IMR-90 (cell line): ENCODE measurements at regions of chr11 and their contacts with region 1.

Region 1: DNA sequence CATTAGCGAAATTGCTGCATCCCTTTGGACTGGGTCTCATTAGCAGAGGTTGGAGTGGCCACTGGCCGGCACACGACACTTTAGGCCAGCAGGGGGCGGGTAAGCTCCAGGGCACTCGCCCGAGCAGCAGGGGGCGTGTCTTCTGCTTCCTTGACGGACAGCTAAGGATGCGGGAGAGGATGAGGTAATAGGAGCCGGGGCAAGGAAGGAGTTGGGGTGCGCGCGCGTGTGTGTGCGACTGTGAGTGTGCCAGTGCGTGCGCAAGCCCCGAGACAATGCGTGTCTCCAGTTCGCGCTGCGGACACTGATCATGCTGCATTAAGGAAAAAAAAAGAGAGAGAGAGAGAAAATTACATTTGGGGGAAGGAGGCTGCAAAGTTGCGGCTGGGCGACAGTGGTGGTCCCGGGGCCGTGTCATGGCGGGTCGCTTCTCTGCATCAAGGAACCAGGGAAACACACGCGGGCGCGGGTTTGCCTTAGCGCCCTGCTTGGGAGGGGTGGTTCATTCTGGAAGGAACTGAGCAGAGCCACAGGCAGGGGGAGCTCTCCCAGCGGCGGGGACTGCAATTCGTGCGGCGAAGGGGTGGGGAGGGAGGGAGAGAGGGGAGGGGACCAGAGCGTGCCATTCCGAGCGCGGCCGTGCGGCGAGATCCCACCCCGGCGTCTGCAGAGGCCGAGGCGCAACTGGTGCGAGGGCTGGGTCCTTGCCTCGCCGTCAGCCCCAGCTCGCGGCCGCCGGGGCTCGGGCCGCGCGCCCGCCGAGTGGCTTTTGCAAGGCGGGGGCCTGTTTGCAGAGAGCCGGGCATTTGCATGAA is at the start of gene DTX4:
- DNase-seq: peak; percentile 86
- ATAC-seq: peak; percentile 87
- H3K4me3 ChIP-seq: peak within 1 kb of the TSS; percentile 54
- H3K27ac ChIP-seq: peak within 1 kb of the TSS; percentile 61
- H3K4me1 ChIP-seq: peaks cover 11% of the 10 kb centered on the region
- H3K27me3 ChIP-seq: peaks cover 3% of the 10 kb centered on the region
- CTCF ChIP-seq: peak; percentile 98
- POLR2A ChIP-seq: peak; percentile 48; the same call in 1 of the 2 replicates
- RAD21 ChIP-seq: peak; percentile 96
- total RNA-seq, gene DTX4: 2.5 and 2.7 TPM in 2 replicates

Region 2: DNA sequence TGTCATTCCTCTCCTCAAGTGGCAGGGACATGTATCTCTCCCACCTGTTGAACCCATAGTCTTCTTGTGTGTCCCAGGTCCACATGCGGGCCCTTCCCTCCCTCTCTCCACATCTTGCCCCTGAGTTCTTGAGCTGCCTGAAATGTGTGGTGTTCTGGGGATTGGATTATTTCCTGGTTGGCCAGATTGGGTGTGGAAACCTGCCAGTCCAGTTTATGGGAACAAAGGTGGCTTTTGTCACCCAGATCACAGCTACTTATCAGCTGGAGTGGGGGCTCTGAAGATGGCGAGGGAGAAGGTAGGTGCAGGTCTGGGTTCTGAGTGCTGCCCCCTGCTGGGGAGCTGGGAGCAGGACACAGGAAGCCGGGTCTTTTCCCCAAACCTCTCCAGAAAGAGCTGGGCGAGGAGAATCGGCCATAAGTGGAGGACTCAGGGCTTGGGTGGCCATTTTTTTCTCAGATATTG is 14.4 kb after region 1 on chr11:
- CTCF ChIA-PET with region 1: interaction called, 25 read pairs
- POLR2A ChIA-PET with region 1: no interaction called
- dilution Hi-C with region 1: no loop called
- in situ Hi-C with region 1: no loop called
- intact Hi-C with region 1: loop called (anchors 2 kb)
- DNase-seq: no peak
- ATAC-seq: no peak
- H3K4me3 ChIP-seq: no peak overlapping the region
- H3K27ac ChIP-seq: no peak overlapping the region
- H3K4me1 ChIP-seq: peaks cover 20% of the 10 kb centered on the region
- H3K27me3 ChIP-seq: no peaks in the 10 kb centered on the region
- CTCF ChIP-seq: peak; percentile 43
- POLR2A ChIP-seq: no peak
- RAD21 ChIP-seq: 0 out of 2 replicates have a peak, but pooled peaks have one; percentile 8

Region 3: DNA sequence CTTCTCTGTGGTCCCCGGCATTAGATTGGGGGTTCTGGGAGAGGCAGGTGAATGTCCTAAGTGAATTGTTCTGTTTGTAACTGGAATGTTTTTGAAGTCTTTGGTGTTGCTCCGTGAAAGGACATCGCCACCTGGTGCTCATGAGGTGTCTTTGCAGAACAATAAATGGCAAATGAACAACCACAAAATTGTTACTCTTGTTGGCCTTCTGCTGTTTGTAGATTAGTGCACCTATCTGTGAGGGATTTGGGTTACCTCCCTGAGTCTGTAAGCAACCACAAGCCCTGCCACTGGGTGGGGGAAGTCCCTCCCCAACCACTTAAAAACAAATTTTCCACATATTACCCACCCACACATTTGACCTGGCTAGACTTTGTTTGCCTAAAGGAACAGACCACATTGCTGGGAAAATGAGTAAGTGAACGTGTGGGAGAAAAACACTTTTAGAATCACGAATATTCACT is 36.3 kb after region 1 on chr11:
- CTCF ChIA-PET with region 1: interaction called, 13 read pairs
- POLR2A ChIA-PET with region 1: interaction called, 4 read pairs
- dilution Hi-C with region 1: no loop called
- in situ Hi-C with region 1: no loop called
- intact Hi-C with region 1: loop called (anchors 1 kb)
- DNase-seq: peak; percentile 91
- ATAC-seq: peak; percentile 62
- H3K4me3 ChIP-seq: no peak overlapping the region
- H3K27ac ChIP-seq: no peak overlapping the region
- H3K4me1 ChIP-seq: peaks cover 13% of the 10 kb centered on the region
- H3K27me3 ChIP-seq: peaks cover 9% of the 10 kb centered on the region
- CTCF ChIP-seq: peak; percentile 70
- POLR2A ChIP-seq: no peak
- RAD21 ChIP-seq: peak; percentile 74

Region 4: GRCh38 chr11:59283825-59284772 is 112.4 kb after region 1 on chr11:
- CTCF ChIA-PET with region 1: interaction called, 10 read pairs
- POLR2A ChIA-PET with region 1: no interaction called
- dilution Hi-C with region 1: no loop called
- in situ Hi-C with region 1: loop called (anchors 5 kb)
- intact Hi-C with region 1: loop called (anchors 1 kb)
- DNase-seq: peak; percentile 57
- ATAC-seq: peak; percentile 88
- H3K4me3 ChIP-seq: no peak overlapping the region
- H3K27ac ChIP-seq: no peak overlapping the region
- H3K4me1 ChIP-seq: no peaks in the 10 kb centered on the region
- H3K27me3 ChIP-seq: peaks cover 25% of the 10 kb centered on the region
- CTCF ChIP-seq: peak; percentile 84
- POLR2A ChIP-seq: no peak
- RAD21 ChIP-seq: peak; percentile 75

Region 5: DNA sequence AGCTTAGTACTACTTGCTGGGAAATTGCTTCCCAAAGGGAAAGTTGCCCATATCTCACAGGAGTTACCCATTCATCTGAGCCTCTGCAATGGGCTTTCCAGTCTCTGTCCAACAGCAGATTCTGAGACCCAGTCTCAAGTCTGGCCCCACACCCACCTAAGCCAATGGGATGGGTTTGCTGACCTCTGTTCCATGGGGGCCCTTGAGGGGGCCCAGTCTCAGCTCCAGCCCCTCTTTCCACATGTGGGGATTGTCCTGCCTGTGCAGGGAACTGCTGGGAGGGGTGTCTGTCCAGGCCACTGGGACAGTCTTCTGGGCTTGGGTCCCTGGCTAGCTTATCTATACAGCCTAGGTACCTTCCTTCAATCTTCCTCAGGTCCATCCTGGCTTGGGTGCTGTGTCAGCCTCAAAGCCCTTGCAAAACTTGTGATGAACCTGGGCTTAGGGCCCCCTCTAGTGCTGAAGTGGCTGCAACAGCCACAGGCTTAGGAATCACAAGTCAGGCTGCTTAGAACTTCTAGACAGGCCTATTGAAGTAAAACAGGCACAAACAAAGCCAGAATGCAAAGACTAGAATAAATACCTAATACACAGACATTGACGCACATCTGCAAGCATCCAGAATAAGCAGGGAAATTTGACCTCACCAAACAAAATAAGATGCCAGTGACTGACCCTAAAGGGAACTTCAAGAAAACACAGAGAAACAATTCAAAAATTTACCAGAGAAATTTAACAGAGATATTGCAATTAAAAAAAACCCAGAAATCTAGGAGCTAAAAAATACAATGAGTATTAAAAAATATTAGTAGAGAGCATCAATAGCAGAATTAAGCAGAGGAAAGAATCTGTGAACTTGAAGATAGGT is 508.8 kb after region 1 on chr11:
- CTCF ChIA-PET with region 1: no interaction called
- POLR2A ChIA-PET with region 1: no interaction called
- dilution Hi-C with region 1: no loop called
- in situ Hi-C with region 1: no loop called
- intact Hi-C with region 1: loop called (anchors 5 kb)
- DNase-seq: peak; percentile 83
- ATAC-seq: peak; percentile 100
- H3K4me3 ChIP-seq: no peak overlapping the region
- H3K27ac ChIP-seq: no peak overlapping the region
- H3K4me1 ChIP-seq: no peaks in the 10 kb centered on the region
- H3K27me3 ChIP-seq: no peaks in the 10 kb centered on the region
- CTCF ChIP-seq: peak; percentile 87
- POLR2A ChIP-seq: no peak
- RAD21 ChIP-seq: peak; percentile 88